CD4-positive, alpha-beta memory T cell (primary cell): ENCODE measurements at regions of chr20 and their contacts with region 1.

Region 1: GRCh38 chr20:50987592-50988210 is 29.1 kb downstream of the MOCS3 start:
- DNase-seq: peak; percentile 64 to 76 (median 72)
- H3K4me3 ChIP-seq: no peak overlapping the region
- H3K4me3 Mint-ChIP-seq: no peak overlapping the region
- H3K27ac ChIP-seq: no peak overlapping the region
- H3K27ac Mint-ChIP-seq: no peak overlapping the region
- H3K4me1 ChIP-seq: no peaks in the 10 kb centered on the region
- H3K4me1 Mint-ChIP-seq: peaks cover 0 to 2% (median under 1%) of the 10 kb centered on the region in 4 donors
- H3K27me3 ChIP-seq: no peaks in the 10 kb centered on the region
- H3K27me3 Mint-ChIP-seq: peaks cover 22 to 26% of the 10 kb centered on the region in 2 donors

Region 2: DNA sequence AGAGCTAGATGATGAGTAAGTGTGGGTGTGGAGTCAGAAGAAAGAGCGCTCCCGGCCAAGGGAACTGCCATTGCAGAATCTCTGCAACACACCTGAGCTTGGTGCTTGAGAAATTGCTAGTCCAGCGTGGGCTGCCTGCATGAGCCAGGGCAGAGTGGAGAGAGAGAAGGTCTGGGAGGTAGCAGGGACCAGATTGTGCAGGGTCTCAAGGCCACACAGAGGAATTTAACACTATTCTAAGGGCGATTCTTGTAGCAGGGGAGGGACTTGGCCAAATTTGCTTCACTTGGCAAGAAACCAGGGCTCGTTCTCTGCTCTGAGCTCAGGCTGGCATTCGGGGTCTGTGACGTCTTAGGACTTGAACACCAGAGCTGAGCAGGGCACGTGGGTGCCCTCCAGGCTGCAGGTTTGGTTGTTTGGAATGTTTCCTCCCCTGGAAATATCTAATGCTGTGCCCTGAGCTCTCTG is 139.3 kb before region 1 on chr20:
- CTCF ChIA-PET with region 1: no interaction called
- POLR2A ChIA-PET with region 1: no interaction called
- intact Hi-C with region 1: no loop called
- DNase-seq: no peak
- H3K4me3 ChIP-seq: no peak overlapping the region
- H3K4me3 Mint-ChIP-seq: no peak overlapping the region
- H3K27ac ChIP-seq: no peak overlapping the region
- H3K27ac Mint-ChIP-seq: peak overlapping the region in 2 of 7 donors; percentile 9 to 28
- H3K4me1 ChIP-seq: peaks cover 8% of the 10 kb centered on the region
- H3K4me1 Mint-ChIP-seq: peaks cover 0 to 1% (median 0%) of the 10 kb centered on the region in 4 donors
- H3K27me3 ChIP-seq: no peaks in the 10 kb centered on the region
- H3K27me3 Mint-ChIP-seq: no peaks in the 10 kb centered on the region

Region 3: GRCh38 chr20:51306503-51307358 is 319.0 kb after region 1 on chr20:
- CTCF ChIA-PET with region 1: interaction called, 173 read pairs
- POLR2A ChIA-PET with region 1: interaction called, 4 read pairs
- intact Hi-C with region 1: no loop called
- DNase-seq: peak; percentile 55 to 65 (median 59)
- H3K4me3 ChIP-seq: no peak overlapping the region
- H3K4me3 Mint-ChIP-seq: no peak overlapping the region
- H3K27ac ChIP-seq: no peak overlapping the region
- H3K27ac Mint-ChIP-seq: peak overlapping the region in 2 of 7 donors; percentile 12 to 39
- H3K4me1 ChIP-seq: no peaks in the 10 kb centered on the region
- H3K4me1 Mint-ChIP-seq: peaks cover 0 to 6% (median 3%) of the 10 kb centered on the region in 4 donors
- H3K27me3 ChIP-seq: no peaks in the 10 kb centered on the region
- H3K27me3 Mint-ChIP-seq: peaks cover 13 to 15% of the 10 kb centered on the region in 2 donors

Region 4: DNA sequence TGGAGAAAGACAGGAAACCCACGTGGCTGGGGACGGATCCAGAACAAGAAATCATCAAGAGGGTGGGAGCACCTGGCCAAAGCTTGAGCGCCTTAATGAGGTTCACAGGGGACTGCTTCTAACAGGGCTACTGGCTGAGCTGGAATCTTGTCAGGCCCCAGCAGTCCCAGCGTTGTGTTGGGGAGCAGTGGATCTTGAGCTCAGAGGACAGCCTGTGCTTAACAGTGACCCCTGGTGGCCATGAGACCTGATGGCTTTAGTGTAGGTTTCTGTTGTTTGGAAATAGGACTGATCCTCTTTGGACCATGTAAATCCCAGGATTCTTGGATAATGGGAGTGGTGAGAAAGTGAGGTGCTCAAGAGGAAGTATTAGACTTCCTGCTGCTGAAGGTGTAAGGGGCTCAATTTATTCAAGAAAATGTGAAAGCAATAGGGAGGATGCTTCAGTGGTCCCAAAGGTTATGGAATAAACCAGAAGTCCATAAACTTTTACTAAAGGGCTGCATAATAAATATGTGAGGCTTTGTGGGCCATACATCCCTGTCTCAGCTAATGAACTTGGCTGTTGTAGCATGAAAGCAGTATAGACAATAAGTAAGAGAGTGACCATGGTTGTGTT is 338.6 kb after region 1 on chr20:
- CTCF ChIA-PET with region 1: interaction called, 63 read pairs
- POLR2A ChIA-PET with region 1: no interaction called
- intact Hi-C with region 1: loop called (anchors 5 kb)
- DNase-seq: peak in 2 of 5 donors; percentile 28 to 37
- H3K4me3 ChIP-seq: no peak overlapping the region
- H3K4me3 Mint-ChIP-seq: no peak overlapping the region
- H3K27ac ChIP-seq: no peak overlapping the region
- H3K27ac Mint-ChIP-seq: no peak overlapping the region
- H3K4me1 ChIP-seq: no peaks in the 10 kb centered on the region
- H3K4me1 Mint-ChIP-seq: no peaks in the 10 kb centered on the region
- H3K27me3 ChIP-seq: no peaks in the 10 kb centered on the region
- H3K27me3 Mint-ChIP-seq: peaks cover 6 to 20% of the 10 kb centered on the region in 2 donors

Region 5: DNA sequence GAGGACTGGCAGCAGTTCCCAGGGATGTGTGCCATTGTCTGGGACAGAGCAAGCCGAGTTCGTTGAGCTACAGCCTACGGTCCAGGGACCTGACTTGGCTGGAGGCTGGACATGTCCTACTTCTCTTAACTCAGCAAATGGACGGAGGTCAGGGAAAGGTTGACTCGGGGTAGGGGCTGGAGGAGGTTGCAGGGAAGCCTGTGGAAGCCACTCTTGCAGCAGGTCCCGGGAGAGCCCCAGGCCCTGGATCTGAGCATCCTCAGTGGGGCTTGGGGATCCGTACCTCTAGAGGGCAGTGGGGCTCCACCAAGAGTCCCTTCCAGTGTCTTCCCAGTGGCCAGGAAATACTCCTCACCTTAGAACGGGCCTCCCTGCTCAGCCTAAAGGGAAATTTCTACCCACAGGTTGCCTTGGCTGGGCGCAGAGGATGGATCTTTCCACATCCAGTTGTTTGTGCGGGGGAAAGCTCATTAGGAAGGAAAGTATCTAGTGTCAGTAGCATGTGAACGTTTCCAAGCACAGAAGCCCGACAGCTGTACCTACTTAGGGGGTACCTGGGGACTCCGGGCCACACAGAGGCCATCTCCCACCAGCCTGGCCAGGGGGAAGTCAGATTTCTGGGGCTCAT is 384.6 kb after region 1 on chr20:
- CTCF ChIA-PET with region 1: no interaction called
- POLR2A ChIA-PET with region 1: no interaction called
- intact Hi-C with region 1: loop called (anchors 2 kb)
- DNase-seq: peak in 4 of 5 donors; percentile 41 to 54 (median 46)
- H3K4me3 ChIP-seq: no peak overlapping the region
- H3K4me3 Mint-ChIP-seq: no peak overlapping the region
- H3K27ac ChIP-seq: no peak overlapping the region
- H3K27ac Mint-ChIP-seq: peak overlapping the region in 2 of 7 donors; percentile 63 to 81
- H3K4me1 ChIP-seq: no peaks in the 10 kb centered on the region
- H3K4me1 Mint-ChIP-seq: peaks cover 0 to 6% (median 4%) of the 10 kb centered on the region in 4 donors
- H3K27me3 ChIP-seq: no peaks in the 10 kb centered on the region
- H3K27me3 Mint-ChIP-seq: no peaks in the 10 kb centered on the region